ENCODE measurements at regions of chr20 and their contacts with region 1.

Region 1: DNA sequence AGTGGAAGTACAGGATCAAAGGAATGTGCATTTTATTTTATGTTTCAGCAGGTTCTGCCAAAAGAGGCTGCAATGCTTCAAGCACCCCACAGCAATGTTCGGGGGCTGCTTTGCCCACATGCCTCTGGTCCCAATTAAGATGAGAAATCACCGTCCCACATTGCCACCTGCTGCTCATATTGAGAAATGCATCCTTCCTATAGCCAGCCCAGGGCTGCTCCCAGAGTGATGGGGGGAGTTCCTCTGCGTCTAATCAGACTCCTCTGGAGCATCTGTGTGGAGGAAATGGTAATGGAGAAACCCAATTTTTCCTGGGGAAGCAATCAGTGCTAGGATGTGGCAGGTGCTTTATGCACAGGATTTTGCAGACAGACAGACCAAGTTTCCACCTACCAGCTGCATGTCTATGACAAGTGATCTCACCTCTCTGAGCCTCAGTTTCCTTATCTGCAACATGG is 33.7 kb downstream of the PTGIS start:
- DNase-seq: peak; percentile 55
- H3K4me3 Mint-ChIP-seq: peak overlapping the region; percentile 29
- H3K27ac Mint-ChIP-seq: peak overlapping the region; percentile 90
- H3K4me1 Mint-ChIP-seq: peaks cover 23% of the 10 kb centered on the region
- H3K27me3 Mint-ChIP-seq: peaks cover 20% of the 10 kb centered on the region

Region 2: DNA sequence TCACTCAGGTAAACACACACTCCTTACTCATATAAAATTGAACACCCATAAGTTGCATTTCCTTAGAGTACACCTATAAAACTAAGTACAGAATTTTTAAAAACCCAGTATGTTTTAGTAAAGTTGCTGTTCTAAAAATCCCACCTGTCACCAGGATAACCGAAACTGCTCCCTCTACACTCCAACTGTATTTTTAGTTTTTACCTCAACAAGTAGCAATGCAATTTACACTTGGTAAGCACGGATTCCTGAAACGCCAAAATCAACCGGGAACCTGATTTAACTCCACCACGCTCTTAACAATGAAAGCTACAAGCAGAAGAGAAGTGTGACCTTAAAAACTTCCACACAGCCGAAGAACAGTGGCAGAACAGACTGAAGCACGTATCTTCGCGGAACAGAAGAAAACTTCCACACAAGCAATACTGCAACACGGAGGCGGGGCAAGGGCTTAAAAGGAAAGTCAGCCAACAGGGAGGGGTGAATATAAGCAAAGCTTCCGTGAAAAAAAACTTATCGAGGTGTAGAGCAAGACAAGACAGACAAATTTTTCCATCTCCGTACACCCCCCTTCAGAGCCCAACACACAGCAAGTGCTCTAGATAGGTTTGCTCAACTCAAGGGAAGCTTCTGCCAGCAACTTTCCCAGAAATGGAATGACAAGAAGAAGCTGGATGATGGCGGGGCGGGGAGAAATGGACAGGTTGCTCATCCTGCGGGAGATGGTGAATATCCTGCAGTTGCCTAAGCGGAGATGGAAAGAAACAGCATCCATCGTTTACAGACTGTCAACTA is 347.6 kb before region 1 on chr20:
- intact Hi-C with region 1: loop called (anchors 10 kb)
- DNase-seq: peak; percentile 66
- H3K4me3 Mint-ChIP-seq: peak overlapping the region; percentile 89
- H3K27ac Mint-ChIP-seq: peak overlapping the region; percentile 81
- H3K4me1 Mint-ChIP-seq: peaks cover 50% of the 10 kb centered on the region
- H3K27me3 Mint-ChIP-seq: peaks cover 4% of the 10 kb centered on the region

Region 3: GRCh38 chr20:49384437-49385088 is 149.7 kb before region 1 on chr20:
- intact Hi-C with region 1: loop called (anchors 1 kb)
- DNase-seq: peak; percentile 50
- H3K4me3 Mint-ChIP-seq: no peak overlapping the region
- H3K27ac Mint-ChIP-seq: no peak overlapping the region
- H3K4me1 Mint-ChIP-seq: peaks cover 6% of the 10 kb centered on the region
- H3K27me3 Mint-ChIP-seq: peaks cover 19% of the 10 kb centered on the region

Region 4: DNA sequence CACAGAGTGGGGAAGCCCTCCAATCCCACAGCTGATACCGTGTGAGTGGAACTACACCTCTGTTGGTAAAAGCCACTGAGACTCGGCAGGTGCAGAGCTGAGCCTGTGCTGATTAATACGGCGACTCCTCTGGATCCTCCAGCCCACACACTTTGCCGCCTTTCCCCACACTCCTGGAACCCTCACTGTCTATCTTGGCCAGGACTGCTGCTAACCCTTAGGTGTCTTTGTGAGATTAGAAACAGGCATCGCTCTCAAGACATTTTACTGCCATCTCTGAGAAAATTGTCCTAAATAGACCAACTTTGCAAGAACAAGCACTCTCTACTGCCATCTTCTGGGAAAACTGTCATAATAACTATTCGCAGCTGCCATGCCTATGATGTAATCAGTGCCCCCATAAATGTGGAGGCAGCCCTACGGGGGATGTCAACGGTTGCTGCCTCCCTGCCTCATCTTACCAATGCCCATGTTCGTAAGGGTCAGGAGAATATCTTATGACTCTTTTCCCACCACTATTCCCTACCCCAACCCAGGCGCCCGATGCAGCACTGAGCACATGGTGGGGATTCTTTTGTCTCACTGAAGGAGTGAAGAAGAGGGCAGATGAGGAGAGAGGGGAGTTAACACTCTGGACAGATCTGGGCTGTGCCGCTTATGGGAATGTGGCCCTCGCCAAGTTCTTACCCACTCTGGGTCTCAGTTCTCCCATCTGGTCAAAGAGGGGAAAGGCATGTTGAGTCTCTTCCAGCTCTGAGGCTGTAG is 25.7 kb before region 1 on chr20:
- intact Hi-C with region 1: loop called (anchors 2 kb)
- DNase-seq: no peak
- H3K4me3 Mint-ChIP-seq: no peak overlapping the region
- H3K27ac Mint-ChIP-seq: no peak overlapping the region
- H3K4me1 Mint-ChIP-seq: no peaks in the 10 kb centered on the region
- H3K27me3 Mint-ChIP-seq: peaks cover 36% of the 10 kb centered on the region

Region 5: GRCh38 chr20:49603209-49603627 is 68.9 kb after region 1 on chr20:
- intact Hi-C with region 1: no loop called
- DNase-seq: no peak
- H3K4me3 Mint-ChIP-seq: no peak overlapping the region
- H3K27ac Mint-ChIP-seq: no peak overlapping the region
- H3K4me1 Mint-ChIP-seq: peaks cover 51% of the 10 kb centered on the region
- H3K27me3 Mint-ChIP-seq: no peaks in the 10 kb centered on the region

Region 6: DNA sequence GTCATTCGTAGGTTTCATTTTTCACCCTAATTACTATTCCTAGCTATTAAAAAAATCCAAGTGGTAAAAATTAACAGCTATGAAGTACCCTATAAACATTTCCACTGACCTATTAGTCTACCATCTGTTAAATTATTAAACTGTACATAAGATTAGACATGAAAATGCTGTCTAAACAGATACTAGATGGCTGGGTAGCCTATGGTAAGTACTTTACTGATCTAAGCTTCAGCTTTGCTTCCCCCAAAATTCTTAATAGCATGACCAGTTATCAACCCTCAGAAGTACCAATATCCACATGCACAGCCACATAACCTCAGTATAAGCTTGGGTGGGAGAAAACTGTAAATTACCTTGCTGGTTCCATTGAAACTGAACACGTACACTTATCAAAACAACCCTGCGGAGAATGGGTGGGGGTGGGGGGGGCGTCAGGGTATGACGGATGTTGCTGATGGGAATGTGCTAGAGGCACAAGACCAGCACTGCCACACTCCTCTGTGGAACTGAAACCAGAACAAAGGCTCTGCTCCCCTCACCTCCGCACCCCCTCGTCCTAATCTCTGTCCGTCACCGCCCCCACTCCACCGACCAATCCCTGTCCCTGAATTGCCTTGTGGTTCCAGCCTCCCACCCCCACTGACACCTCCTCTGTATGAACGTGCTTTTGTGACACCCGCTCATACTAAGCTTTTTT is 134.0 kb after region 1 on chr20:
- intact Hi-C with region 1: loop called (anchors 2 kb)
- DNase-seq: no peak
- H3K4me3 Mint-ChIP-seq: peak overlapping the region; percentile 5
- H3K27ac Mint-ChIP-seq: no peak overlapping the region
- H3K4me1 Mint-ChIP-seq: peaks cover 62% of the 10 kb centered on the region
- H3K27me3 Mint-ChIP-seq: peaks cover 3% of the 10 kb centered on the region